ENCODE measurements at regions of chr3 and their contacts with region 1.

Region 1: GRCh38 chr3:26712211-26713026 is 89.8 kb downstream of the LRRC3B start:
- DNase-seq: peak; percentile 50
- H3K4me3 Mint-ChIP-seq: no peak overlapping the region
- H3K27ac Mint-ChIP-seq: no peak overlapping the region
- H3K4me1 Mint-ChIP-seq: no peaks in the 10 kb centered on the region
- H3K27me3 Mint-ChIP-seq: no peaks in the 10 kb centered on the region
- CTCF ChIP-seq: peak; percentile 56

Region 2: GRCh38 chr3:25904206-25904605 is 808.2 kb before region 1 on chr3:
- CTCF ChIA-PET with region 1: interaction called, 3 read pairs
- POLR2A ChIA-PET with region 1: no interaction called
- intact Hi-C with region 1: loop called (anchors 1 kb)
- DNase-seq: peak; percentile 24
- H3K4me3 Mint-ChIP-seq: no peak overlapping the region
- H3K27ac Mint-ChIP-seq: no peak overlapping the region
- H3K4me1 Mint-ChIP-seq: peaks cover 4% of the 10 kb centered on the region
- H3K27me3 Mint-ChIP-seq: no peaks in the 10 kb centered on the region
- CTCF ChIP-seq: no peak

Region 3: GRCh38 chr3:25962249-25962648 is 750.2 kb before region 1 on chr3:
- CTCF ChIA-PET with region 1: interaction called, 5 read pairs
- POLR2A ChIA-PET with region 1: no interaction called
- intact Hi-C with region 1: loop called (anchors 1 kb)
- DNase-seq: peak; percentile 45
- H3K4me3 Mint-ChIP-seq: no peak overlapping the region
- H3K27ac Mint-ChIP-seq: no peak overlapping the region
- H3K4me1 Mint-ChIP-seq: no peaks in the 10 kb centered on the region
- H3K27me3 Mint-ChIP-seq: no peaks in the 10 kb centered on the region
- CTCF ChIP-seq: peak; percentile 48

Region 4: GRCh38 chr3:26118165-26118564 is 594.3 kb before region 1 on chr3:
- CTCF ChIA-PET with region 1: interaction called, 3 read pairs
- POLR2A ChIA-PET with region 1: no interaction called
- intact Hi-C with region 1: loop called (anchors 1 kb)
- DNase-seq: peak; percentile 4
- H3K4me3 Mint-ChIP-seq: no peak overlapping the region
- H3K27ac Mint-ChIP-seq: no peak overlapping the region
- H3K4me1 Mint-ChIP-seq: no peaks in the 10 kb centered on the region
- H3K27me3 Mint-ChIP-seq: no peaks in the 10 kb centered on the region
- CTCF ChIP-seq: peak; percentile 51

Region 5: GRCh38 chr3:26484140-26484539 is 228.3 kb before region 1 on chr3:
- CTCF ChIA-PET with region 1: no interaction called
- POLR2A ChIA-PET with region 1: no interaction called
- intact Hi-C with region 1: loop called (anchors 1 kb)
- DNase-seq: peak; percentile 42
- H3K4me3 Mint-ChIP-seq: no peak overlapping the region
- H3K27ac Mint-ChIP-seq: no peak overlapping the region
- H3K4me1 Mint-ChIP-seq: no peaks in the 10 kb centered on the region
- H3K27me3 Mint-ChIP-seq: no peaks in the 10 kb centered on the region
- CTCF ChIP-seq: peak; percentile 33

Measured in MCF 10A (cell line).